Vagina (tissue), 2 donors: ENCODE measurements at regions of chr7 and their contacts with region 1.

Region 1: GRCh38 chr7:137898839-137899721 is 52.3 kb upstream of the DGKI start:
- DNase-seq: no peak
- H3K4me3 ChIP-seq: no peak overlapping the region
- H3K27ac ChIP-seq: peak overlapping the region; percentile 36
- H3K4me1 ChIP-seq: peaks cover 17% of the 10 kb centered on the region
- H3K27me3 ChIP-seq: no peaks in the 10 kb centered on the region
- CTCF ChIP-seq: peak; percentile 70 to 92 (median 82)
- POLR2A ChIP-seq: no peak

Region 2: DNA sequence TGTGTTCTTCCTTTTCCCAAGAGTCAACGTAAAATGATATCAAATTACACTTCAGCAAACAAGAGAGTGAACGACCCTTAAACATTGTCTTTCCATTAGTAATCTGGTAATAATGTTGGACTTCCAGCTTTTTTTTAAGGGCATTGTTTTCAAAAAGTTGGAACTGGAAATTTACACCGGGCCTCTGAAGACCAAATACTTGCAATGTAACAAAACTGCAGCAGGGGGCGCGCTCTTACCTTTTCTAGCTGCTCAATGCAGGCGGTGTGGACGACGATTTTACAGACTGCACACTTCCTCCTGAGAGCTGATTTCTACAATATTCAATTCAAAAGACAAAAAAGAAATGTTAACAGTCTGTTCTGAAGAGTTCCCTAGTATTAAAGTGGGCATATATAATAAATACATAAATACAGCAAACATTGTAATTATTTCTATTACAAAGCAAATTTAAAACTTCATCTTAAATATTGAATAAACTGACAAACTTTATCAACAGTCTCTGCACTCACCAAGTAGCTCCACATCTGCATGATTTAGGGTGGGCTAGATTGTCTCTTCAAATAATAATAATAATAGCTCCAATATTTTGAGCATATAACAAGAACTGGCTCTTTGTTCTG is 242.7 kb before region 1 on chr7:
- intact Hi-C with region 1: loop called (anchors 10 kb)
- DNase-seq: no peak
- H3K4me3 ChIP-seq: no peak overlapping the region
- H3K27ac ChIP-seq: no peak overlapping the region
- H3K4me1 ChIP-seq: no peaks in the 10 kb centered on the region
- H3K27me3 ChIP-seq: no peaks in the 10 kb centered on the region
- CTCF ChIP-seq: peak; percentile 59 to 80 (median 71)
- POLR2A ChIP-seq: no peak

Region 3: GRCh38 chr7:137978464-137979237 is 79.6 kb after region 1 on chr7:
- intact Hi-C with region 1: no loop called
- DNase-seq: peak in 1 of 2 donors; percentile 94
- H3K4me3 ChIP-seq: no peak overlapping the region
- H3K27ac ChIP-seq: peak overlapping the region; percentile 78
- H3K4me1 ChIP-seq: peaks cover 84% of the 10 kb centered on the region
- H3K27me3 ChIP-seq: no peaks in the 10 kb centered on the region
- CTCF ChIP-seq: no peak
- POLR2A ChIP-seq: no peak

Region 4: DNA sequence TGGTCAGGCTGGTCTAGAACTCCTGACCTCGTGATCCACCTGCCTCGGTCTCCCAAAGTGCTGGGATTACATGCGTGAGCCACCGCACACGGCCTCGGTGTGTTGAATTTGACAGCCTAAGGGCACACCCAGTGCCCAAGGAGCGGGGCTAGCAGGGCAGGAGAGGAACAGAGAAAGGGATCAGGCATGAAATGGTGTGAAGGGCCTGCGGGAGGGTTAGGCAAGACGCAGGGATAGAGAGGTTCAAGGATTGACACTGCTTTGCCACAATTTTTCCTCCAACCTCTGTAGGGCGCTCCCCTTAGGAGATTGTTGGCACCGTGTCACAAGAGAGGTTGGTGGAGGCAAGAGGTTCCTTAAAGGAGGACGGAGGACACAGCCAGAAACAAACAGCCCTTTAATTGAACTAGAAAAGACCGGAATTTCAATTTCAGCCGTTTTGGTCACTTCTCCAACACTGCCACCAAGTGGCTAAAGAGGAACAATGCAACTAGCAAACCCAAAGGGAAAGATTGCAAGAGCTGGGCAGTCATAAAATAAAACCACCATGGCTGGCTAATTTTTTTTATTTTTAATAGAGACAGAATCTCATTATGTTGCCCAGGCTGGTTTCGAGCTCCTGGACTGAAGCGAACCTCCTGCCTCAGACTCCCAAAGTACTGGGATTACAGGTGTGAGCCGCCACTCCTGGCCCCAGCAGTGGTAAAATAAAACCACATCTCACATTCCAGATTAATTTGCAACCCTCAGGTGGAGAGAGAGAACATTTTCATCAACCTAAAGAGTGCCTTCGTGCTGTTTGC is 109.7 kb after region 1 on chr7:
- intact Hi-C with region 1: loop called (anchors 2 kb)
- DNase-seq: no peak
- H3K4me3 ChIP-seq: no peak overlapping the region
- H3K27ac ChIP-seq: no peak overlapping the region
- H3K4me1 ChIP-seq: no peaks in the 10 kb centered on the region
- H3K27me3 ChIP-seq: no peaks in the 10 kb centered on the region
- CTCF ChIP-seq: peak; percentile 81 to 87 (median 86)
- POLR2A ChIP-seq: no peak